K562 (cell line): ENCODE measurements at regions of chr3 and their contacts with region 1.

Region 1: GRCh38 chr3:33954956-33955355 is 156.5 kb downstream of the PDCD6IP start:
- DNase-seq: peak in 3 of 4 experiments; percentile 30 to 69 (median 57)
- ATAC-seq: peak; percentile 91
- H3K4me3 ChIP-seq: no peak overlapping the region
- H3K27ac ChIP-seq: no peak overlapping the region
- H3K4me1 ChIP-seq: peaks cover 0 to 11% of the 10 kb centered on the region in 2 experiments; a peak in 2 of 5 replicates
- H3K27me3 ChIP-seq: no peaks in the 10 kb centered on the region
- CTCF ChIP-seq: peak; percentile 71 to 79 (median 77)
- EP300 ChIP-seq: no peak
- POLR2A ChIP-seq: no peak
- RAD21 ChIP-seq: peak; percentile 82 to 86

Region 2: DNA sequence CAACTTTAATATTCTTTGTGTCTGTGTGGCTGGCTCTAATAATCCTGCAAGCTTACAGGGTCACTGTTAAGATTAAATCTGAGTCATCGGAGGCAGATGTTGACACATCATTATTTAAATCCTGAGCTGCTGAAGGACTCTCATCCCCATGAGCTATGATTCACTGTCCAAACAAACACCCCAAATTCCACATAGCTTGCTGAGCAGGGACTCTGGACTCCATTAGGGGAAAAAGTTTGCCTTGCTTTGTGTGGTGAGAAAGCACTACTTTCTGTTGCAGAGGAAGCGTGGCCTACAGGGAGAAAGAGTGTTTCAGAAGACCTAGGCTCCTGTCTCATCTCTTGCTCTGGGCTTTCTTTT is 57.1 kb after region 1 on chr3:
- CTCF ChIA-PET with region 1: interaction called, 5 read pairs
- POLR2A ChIA-PET with region 1: no interaction called
- in situ Hi-C with region 1: no loop called
- intact Hi-C with region 1: loop called (anchors 1 kb)
- DNase-seq: peak; percentile 31 to 44 (median 34)
- ATAC-seq: no peak
- H3K4me3 ChIP-seq: no peak overlapping the region
- H3K27ac ChIP-seq: no peak overlapping the region
- H3K4me1 ChIP-seq: peaks cover 3 to 9% of the 10 kb centered on the region in 2 experiments
- H3K27me3 ChIP-seq: no peaks in the 10 kb centered on the region
- CTCF ChIP-seq: no peak
- EP300 ChIP-seq: no peak
- POLR2A ChIP-seq: no peak
- RAD21 ChIP-seq: no peak

Region 3: DNA sequence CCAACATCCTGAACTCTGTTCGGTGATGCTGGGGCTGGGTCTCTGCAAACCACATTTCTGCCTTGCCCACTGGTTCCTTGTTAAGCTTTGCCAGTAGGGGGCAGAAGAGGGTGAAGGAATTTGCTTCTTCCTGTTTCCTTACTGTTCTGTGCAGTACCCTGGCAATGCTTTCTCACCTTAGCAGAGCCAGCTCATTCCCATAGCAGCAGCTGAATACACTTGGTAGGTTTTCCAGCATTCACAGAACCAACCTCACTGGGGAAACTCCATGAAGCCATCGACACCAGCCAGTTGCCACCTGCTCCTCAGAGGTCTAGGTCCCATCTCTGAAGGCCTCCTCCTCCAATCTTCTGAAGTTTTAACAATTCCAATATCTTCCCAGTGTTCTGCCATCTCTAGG is 151.9 kb after region 1 on chr3:
- CTCF ChIA-PET with region 1: no interaction called
- POLR2A ChIA-PET with region 1: no interaction called
- in situ Hi-C with region 1: no loop called
- intact Hi-C with region 1: loop called (anchors 10 kb)
- DNase-seq: peak; percentile 46 to 61 (median 53)
- ATAC-seq: peak; percentile 95
- H3K4me3 ChIP-seq: no peak overlapping the region
- H3K27ac ChIP-seq: no peak overlapping the region
- H3K4me1 ChIP-seq: no peaks in the 10 kb centered on the region; a peak in 1 of 5 replicates
- H3K27me3 ChIP-seq: no peaks in the 10 kb centered on the region
- CTCF ChIP-seq: peak; percentile 58 to 81 (median 76)
- EP300 ChIP-seq: no peak
- POLR2A ChIP-seq: no peak
- RAD21 ChIP-seq: peak; percentile 40 to 67; a peak in 3 of 4 replicates